ENCODE measurements at regions of chr1 and their contacts with region 1.

Region 1: DNA sequence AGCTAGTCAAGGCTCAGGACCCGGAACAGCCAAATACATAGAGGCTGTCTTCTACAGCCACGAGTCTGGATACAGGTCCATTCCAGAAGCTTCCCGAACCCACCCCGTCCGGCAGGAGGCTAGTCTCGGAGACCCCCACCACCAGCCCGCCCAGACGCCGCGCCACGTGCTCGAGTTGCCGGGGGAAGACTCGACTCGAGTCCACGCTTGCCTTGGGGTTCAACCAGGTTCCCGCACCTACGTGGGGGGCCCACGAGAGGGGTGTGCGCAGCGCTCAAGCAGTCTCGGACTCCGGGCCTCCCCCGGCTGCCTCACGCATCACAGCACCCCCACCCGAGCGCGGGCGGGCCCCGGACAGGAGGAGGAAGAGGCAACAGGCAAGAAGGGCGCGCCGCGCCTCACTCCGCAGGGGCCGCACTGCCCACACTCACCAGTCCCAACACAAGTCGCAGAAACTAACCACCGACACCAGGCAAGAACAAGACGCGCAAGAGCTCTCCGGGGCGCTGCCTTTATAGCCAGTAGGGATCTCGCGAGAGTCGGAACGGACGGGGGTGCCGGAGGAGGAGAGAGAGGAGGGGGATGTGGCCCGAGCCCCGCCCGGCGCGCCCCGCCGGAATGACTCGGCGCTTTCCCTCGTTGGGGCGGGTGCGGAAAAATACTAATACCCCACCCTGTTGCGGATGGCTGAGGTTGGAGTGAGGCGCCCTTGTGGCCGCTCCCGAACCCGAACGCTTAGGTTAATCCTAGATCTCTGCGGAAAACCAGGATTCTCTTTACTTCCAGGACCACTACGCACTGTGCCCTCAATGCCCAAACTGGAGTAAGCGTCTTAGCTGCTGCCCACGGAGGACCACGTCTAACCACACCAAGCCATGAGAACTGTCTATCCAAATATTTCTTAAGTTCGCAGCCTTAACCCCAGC is at the start of gene PRDX1:
- DNase-seq: peak; percentile 96
- H3K4me3 Mint-ChIP-seq: peak within 1 kb of the TSS; percentile 97
- H3K27ac Mint-ChIP-seq: peak within 1 kb of the TSS; percentile 90
- H3K4me1 Mint-ChIP-seq: peaks cover 50% of the 10 kb centered on the region
- H3K27me3 Mint-ChIP-seq: peaks cover 4% of the 10 kb centered on the region
- total RNA-seq, gene PRDX1: 269 to 331 TPM

Region 2: GRCh38 chr1:45478121-45478814 is 43.4 kb before region 1 on chr1:
- CTCF ChIA-PET with region 1: no interaction called
- POLR2A ChIA-PET with region 1: no interaction called
- DNase-seq: no peak
- H3K4me3 Mint-ChIP-seq: no peak overlapping the region
- H3K27ac Mint-ChIP-seq: no peak overlapping the region
- H3K4me1 Mint-ChIP-seq: peaks cover 6% of the 10 kb centered on the region
- H3K27me3 Mint-ChIP-seq: no peaks in the 10 kb centered on the region

Region 3: DNA sequence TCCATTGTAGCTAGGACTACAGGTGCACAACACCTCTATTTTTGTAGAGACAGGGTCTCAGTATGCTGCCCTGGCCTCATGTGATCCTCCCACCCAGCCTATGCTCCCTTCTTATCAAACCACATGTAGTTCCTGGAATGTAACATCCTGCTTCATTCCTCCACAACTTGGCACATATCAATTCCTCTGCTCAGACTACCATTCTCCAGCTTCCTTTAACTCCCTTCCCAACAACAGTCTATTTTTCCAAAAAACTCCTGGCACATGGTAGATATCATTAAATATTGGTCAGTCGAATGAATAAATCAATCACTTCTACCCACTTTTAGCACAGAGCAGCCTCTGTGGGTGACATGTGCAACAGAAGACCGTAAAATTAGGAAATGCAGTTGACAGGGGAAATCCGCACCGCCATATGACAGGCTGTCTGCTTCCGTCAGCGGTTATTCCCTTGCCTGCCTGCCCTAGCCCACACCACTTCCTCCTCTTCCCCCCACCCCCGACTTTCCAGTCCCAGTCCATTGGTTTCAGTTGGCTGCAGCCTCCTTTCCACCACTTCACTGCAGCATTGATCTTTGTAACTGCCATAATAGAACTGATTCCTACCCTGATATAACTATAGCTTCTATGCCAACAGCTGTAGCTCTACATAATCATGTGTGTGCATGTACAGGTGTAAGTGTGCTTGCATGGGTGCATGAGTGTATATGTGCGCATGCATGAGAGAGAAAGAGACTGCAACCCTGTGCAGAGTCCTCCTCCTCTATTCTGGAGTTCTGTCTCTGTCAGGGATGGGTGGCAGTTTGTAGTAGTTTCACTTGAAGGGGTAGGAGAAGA is 22.1 kb after region 1 on chr1:
- CTCF ChIA-PET with region 1: interaction called, 10 read pairs
- POLR2A ChIA-PET with region 1: interaction called, 6 read pairs
- DNase-seq: peak; percentile 73
- H3K4me3 Mint-ChIP-seq: peak overlapping the region; percentile 24
- H3K27ac Mint-ChIP-seq: peak overlapping the region; percentile 7
- H3K4me1 Mint-ChIP-seq: peaks cover 31% of the 10 kb centered on the region
- H3K27me3 Mint-ChIP-seq: no peaks in the 10 kb centered on the region